BJ (cell line): ENCODE measurements at regions of chr1 and their contacts with region 1.

Region 1: DNA sequence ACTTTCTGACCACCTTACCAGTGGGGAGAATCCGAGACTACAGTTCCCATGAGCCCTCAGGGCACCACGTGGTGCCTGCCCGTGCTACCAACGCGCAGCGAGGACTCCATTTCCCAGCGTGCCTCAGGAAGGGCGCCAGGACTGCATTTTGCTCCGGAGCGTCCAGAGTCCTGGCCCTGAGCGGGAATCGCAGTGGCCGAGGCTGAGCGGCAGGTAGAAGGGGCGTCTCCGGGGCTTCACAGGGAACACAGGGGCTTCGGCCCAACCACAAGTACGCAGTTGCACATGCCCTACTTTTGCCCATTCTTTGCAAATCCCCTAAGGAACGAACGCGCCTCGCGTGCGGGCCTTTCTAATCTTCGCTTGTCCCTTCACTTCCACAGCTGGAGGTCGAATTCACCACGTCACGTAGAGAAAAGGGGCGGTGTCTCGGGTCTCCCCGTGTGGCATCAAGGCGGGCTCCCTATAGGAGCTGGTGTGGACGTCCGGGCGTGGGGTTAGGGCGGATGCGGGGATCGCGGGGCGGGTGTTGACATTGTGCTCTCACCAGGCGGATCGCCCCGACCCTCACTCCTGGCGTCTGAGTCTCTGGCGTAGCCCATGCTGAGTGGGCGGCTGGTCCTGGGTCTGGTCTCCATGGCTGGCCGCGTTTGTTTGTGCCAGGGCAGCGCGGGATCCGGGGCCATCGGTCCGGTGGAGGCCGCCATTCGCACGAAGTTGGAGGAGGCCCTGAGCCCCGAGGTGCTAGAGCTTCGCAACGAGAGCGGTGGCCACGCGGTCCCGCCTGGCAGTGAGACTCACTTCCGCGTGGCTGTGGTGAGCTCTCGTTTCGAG is at the start of gene BOLA1:
- DNase-seq: peak; percentile 53
- H3K4me3 ChIP-seq: peak within 1 kb of the TSS; percentile 50
- H3K27me3 ChIP-seq: no peaks in the 10 kb centered on the region
- CTCF ChIP-seq: no peak
- polyA plus RNA-seq, gene BOLA1: 15.1 and 21.0 TPM in 2 replicates

Region 2: DNA sequence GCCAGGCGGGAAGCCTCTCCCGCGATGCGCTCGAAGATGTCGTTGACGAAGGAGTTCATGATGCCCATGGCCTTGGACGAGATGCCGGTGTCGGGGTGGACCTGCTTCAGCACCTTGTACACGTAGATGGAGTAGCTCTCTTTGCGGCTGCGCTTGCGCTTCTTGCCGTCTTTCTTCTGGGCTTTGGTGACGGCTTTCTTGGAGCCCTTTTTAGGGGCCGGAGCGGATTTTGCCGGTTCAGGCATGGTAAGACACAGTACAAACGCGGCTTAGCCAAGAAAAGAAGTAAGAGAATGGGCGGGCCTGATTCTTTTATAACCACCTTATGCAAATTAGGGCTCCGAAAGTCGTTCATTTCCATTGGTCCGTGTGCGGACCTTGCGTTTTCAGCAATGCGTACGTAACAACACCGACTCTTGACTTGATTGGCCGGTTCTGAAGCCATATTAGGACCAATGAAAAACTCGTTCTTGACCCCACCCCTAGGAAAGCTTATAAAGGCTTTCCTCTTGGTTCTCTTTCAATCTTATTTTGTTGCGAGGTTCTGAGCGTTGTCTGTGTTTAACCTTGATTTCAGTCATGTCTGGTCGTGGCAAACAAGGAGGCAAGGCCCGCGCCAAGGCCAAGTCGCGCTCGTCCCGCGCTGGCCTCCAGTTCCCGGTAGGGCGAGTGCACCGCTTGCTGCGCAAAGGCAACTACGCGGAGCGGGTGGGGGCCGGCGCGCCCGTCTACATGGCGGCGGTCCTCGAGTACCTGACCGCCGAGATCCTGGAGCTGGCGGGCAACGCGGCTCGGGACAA is 13.1 kb before region 1 on chr1:
- CTCF ChIA-PET with region 1: interaction called, 6 read pairs
- POLR2A ChIA-PET with region 1: interaction called, 16 read pairs
- DNase-seq: peak; percentile 98
- H3K4me3 ChIP-seq: peak overlapping the region; percentile 67
- H3K27me3 ChIP-seq: no peaks in the 10 kb centered on the region
- CTCF ChIP-seq: no peak

Region 3: GRCh38 chr1:149916193-149916897 is 16.7 kb after region 1 on chr1:
- CTCF ChIA-PET with region 1: interaction called, 10 read pairs
- POLR2A ChIA-PET with region 1: no interaction called
- DNase-seq: no peak
- H3K4me3 ChIP-seq: peak overlapping the region; percentile 65
- H3K27me3 ChIP-seq: no peaks in the 10 kb centered on the region
- CTCF ChIP-seq: no peak

Region 4: DNA sequence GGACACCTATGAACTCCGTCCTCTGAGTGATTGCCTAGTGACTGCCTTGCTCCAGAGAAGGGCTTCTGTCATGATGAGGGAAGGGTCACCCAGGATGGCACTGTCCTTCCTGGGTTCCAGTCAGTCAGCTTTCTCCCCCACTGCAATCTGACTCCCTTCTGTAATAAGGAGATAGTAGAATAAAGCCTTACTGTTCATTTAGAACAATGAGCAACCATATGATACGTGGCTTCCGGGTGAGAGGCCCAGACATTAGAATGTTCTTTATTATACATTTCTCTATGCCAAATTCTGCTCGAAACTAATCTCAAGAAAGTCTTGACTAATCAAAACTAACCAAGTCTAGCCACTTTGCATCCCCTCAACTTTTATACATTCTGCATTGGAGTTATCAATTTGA is 45.5 kb after region 1 on chr1:
- CTCF ChIA-PET with region 1: no interaction called
- POLR2A ChIA-PET with region 1: no interaction called
- DNase-seq: no peak
- H3K4me3 ChIP-seq: no peak overlapping the region
- H3K27me3 ChIP-seq: no peaks in the 10 kb centered on the region
- CTCF ChIP-seq: no peak

Region 5: DNA sequence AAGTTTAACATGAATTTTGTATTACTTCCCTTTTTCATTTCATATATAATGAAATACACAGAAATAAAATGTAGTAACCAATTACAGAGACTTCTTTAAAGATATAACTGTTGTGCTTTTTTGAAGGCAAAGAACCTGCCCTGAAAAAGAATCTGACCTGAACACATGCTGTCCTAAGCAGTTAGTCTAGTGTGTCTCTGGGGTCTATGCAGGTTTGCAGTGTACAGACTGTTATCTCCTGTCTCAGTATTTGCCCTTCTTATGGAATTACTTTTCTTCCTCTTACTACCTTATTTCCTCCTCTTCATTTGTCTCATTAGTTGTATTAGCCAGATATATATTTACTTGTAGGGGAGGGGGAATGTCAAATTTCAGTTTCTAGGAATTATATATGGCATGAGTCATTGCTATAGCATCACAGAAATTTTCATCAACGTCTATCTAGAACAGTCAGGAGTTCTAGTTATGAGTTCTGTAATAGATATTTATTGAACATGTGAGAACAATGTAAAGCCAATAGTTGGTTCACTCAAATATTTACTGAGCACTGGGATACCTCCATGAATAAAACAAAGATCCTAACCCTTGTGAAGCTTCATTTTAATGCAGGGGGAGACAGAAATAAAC is 221.7 kb after region 1 on chr1:
- CTCF ChIA-PET with region 1: no interaction called
- POLR2A ChIA-PET with region 1: no interaction called
- DNase-seq: no peak
- H3K4me3 ChIP-seq: no peak overlapping the region
- H3K27me3 ChIP-seq: no peaks in the 10 kb centered on the region
- CTCF ChIP-seq: no peak